ENCODE measurements at regions of chr1 and their contacts with region 1.

Region 1: GRCh38 chr1:100866041-100866900 is 28.4 kb downstream of the EXTL2 start:
- DNase-seq: peak; percentile 29

Region 2: DNA sequence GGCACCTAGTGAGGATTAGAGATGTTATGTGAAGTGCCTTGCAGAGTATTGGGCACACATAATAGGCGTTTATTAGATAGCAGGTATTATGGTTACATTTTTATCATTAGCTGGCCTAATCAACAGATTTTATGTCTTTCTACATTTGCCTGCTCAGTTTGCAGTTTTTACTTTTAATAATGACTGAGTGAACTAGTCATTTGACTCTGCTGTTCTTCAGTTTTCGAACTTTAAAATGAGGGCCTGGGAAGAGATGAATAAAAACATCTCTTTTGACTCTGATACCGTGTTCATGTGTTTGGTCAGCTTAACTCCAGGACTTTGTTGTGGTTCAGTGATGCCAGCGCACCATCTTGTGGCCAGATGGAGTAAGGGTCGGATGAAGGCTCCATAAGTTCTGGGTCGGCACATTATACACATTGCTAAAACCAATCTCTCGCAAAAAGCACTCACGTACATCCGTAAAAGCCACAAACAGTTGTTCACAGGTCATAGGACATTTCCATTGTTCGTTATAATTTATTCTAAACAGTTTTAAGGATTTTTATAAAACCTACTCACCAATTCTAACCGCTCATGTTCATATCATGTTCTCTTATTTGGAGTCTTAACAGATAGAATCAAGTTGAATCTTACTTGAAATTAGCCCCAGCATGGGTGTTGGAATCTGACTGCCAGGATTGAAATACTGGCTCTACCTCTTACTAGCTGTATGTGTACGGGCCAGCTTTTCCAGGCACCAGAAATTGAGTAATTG is 406.7 kb before region 1 on chr1:
- in situ Hi-C with region 1: loop called (anchors 25 kb)
- DNase-seq: peak; percentile 77

Region 3: GRCh38 chr1:100657876-100658715 is 208.2 kb before region 1 on chr1:
- in situ Hi-C with region 1: no loop called
- DNase-seq: no peak

Measured in SK-MEL-5 (cell line).